Common myeloid progenitor, CD34-positive (primary cell): ENCODE measurements at regions of chr1 and their contacts with region 1.

Region 1: GRCh38 chr1:156319664-156320063 is 18.4 kb downstream of the CCT3 start:
- DNase-seq: peak; percentile 51 to 71 (median 58)
- H3K4me3 ChIP-seq: no peak overlapping the region
- H3K27ac ChIP-seq: no peak overlapping the region
- H3K4me1 ChIP-seq: no peaks in the 10 kb centered on the region
- H3K27me3 ChIP-seq: no peaks in the 10 kb centered on the region

Region 2: DNA sequence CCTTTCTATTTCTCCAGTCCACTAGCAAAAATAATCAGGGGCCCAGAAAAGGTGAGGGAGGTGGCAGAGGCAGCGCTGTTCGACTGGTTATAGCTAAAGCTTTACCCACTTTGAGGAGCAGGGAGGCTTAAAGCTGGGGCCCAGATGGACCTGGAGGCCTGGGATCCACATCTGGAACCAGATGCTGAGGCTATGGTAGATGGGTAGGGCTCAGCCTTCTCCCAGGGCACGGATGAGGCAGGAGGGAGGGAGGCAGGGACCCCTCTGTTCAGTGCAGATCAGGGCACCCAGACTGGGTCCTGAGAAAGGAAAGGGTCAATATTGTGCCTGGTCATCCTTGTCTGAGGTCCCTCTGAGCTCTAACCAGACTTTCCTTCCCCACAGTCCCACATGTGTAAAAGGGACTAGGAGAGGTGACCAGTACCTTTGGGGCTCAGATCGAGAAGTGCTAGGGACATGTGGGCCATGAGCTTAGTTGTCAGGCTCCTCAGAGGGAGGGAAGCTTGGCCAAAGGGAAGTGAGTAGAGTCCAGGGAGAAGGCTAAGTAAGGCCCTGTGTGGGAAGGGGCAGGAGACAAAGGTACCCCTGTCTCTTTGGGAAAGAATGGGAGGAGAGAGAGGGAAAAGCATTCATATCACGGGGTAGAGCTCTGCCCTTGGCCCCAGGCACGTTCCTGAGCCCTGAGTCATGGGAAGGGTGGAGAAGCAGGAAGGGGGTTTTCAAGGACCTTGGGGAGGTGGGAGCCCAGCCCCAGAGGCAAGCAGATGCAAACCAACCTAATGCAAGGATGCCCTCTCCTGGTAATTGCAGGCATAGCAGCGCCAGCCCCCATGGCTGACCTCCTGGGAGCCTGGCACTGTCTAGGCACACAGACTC is 189.7 kb before region 1 on chr1:
- CTCF ChIA-PET with region 1: interaction called, 12 read pairs
- POLR2A ChIA-PET with region 1: no interaction called
- DNase-seq: peak in 2 of 3 donors; percentile 67 to 73
- H3K4me3 ChIP-seq: no peak overlapping the region
- H3K27ac ChIP-seq: no peak overlapping the region
- H3K4me1 ChIP-seq: peaks cover 5 to 53% (median 48%) of the 10 kb centered on the region in 4 experiments
- H3K27me3 ChIP-seq: no peaks in the 10 kb centered on the region

Region 3: DNA sequence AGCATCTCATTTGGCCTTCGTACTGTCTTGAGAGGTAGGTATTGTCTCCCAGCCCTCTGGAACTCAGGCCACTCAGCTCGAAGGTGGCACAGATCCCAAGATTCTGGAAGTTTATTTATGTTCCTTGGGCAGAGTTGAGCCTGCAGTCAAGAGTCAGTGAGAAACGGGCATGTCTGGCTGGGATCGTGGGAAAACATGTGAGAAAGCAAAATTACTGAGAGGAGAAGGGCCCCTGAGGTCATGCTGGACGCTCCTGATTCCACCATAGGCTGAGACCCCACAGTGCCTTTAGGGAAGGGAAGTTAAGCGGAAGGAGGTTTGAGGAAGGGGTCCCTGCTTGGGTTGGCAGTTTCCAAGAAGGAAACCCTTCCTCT is 178.8 kb before region 1 on chr1:
- CTCF ChIA-PET with region 1: interaction called, 20 read pairs
- POLR2A ChIA-PET with region 1: no interaction called
- DNase-seq: no peak
- H3K4me3 ChIP-seq: no peak overlapping the region
- H3K27ac ChIP-seq: no peak overlapping the region
- H3K4me1 ChIP-seq: peaks cover 0 to 12% (median 3%) of the 10 kb centered on the region in 4 experiments
- H3K27me3 ChIP-seq: no peaks in the 10 kb centered on the region

Region 4: GRCh38 chr1:156146020-156146768 is 173.5 kb before region 1 on chr1:
- CTCF ChIA-PET with region 1: interaction called, 20 read pairs
- POLR2A ChIA-PET with region 1: no interaction called
- DNase-seq: peak; percentile 86 to 93 (median 92)
- H3K4me3 ChIP-seq: peak overlapping the region in 5 of 7 experiments; percentile 12 to 57 (median 32)
- H3K27ac ChIP-seq: peak overlapping the region in 1 of 2 experiments; percentile 66
- H3K4me1 ChIP-seq: peaks cover 0 to 48% (median 38%) of the 10 kb centered on the region in 4 experiments
- H3K27me3 ChIP-seq: no peaks in the 10 kb centered on the region

Region 5: DNA sequence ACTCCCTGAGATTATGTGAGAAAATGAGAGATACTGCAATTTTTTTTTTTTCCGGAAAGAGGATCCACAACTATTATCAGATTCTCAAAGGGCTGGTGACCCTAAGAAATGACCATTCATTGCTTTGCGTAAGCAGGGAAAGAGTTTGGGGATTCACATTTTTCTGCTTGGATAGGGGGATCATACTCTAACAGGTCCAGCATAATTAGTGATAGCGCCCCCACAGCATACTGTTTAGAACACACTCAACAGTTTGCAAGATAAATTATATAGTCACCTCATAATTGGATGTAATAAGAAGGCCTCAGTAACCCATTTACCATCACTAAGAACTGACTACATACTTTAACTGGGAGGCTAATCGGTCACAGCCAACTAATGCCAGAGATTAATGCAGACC is 16.6 kb after region 1 on chr1:
- CTCF ChIA-PET with region 1: interaction called, 18 read pairs
- POLR2A ChIA-PET with region 1: no interaction called
- DNase-seq: peak; percentile 32 to 57 (median 55)
- H3K4me3 ChIP-seq: peak overlapping the region in 5 of 7 experiments; percentile 83 to 98 (median 95)
- H3K27ac ChIP-seq: no peak overlapping the region
- H3K4me1 ChIP-seq: peaks cover 6 to 22% (median 17%) of the 10 kb centered on the region in 4 experiments
- H3K27me3 ChIP-seq: no peaks in the 10 kb centered on the region

Region 6: DNA sequence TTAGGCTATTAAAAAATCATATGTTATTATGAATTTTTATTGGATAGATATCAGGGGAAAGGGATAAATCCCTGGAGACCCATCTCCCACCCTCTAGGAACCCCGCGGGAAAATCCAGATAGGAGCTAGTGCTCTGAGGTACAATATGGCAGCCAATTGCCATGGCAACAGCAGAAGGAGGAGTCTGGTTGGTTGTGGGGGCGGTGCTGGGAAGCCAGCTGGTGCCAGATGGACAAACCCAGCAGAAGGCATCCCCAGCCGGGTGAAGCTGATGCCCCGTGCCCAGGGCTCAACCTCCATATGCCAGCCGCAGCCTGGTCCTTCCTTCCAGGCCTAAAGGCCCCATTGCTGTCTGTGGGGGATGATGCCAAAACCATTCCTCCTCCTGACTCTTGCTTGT is 87.7 kb after region 1 on chr1:
- CTCF ChIA-PET with region 1: no interaction called
- POLR2A ChIA-PET with region 1: no interaction called
- DNase-seq: no peak
- H3K4me3 ChIP-seq: no peak overlapping the region
- H3K27ac ChIP-seq: no peak overlapping the region
- H3K4me1 ChIP-seq: no peaks in the 10 kb centered on the region
- H3K27me3 ChIP-seq: peaks cover 2 to 75% (median 41%) of the 10 kb centered on the region in 5 experiments